ENCODE measurements at regions of chr6 and their contacts with region 1.

Region 1: DNA sequence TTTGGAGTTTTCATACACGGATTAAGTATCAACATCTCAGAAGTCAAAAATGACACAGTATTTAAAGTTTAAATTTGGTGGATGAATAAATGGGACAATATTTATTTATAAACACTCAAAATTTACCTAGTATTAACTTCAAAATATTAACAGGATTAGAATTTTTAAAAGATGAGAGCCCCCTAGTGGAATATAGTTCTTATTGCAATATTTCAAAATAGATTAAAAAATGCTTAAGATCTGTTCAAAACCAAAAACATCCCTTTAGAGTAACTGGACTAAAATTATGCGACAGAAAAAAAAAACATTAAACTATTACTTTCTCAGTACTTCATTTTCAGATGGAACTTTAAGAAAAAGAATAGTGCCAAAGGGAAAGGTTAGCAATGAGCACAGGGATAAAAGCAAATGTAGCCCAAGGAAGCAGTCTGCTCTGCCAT is 56.6 kb downstream of the SNX14 start:
- DNase-seq: no peak
- H3K4me3 Mint-ChIP-seq: no peak overlapping the region
- H3K27ac Mint-ChIP-seq: no peak overlapping the region
- H3K4me1 Mint-ChIP-seq: no peaks in the 10 kb centered on the region
- H3K27me3 Mint-ChIP-seq: no peaks in the 10 kb centered on the region
- CTCF ChIP-seq: peak; percentile 29

Region 2: DNA sequence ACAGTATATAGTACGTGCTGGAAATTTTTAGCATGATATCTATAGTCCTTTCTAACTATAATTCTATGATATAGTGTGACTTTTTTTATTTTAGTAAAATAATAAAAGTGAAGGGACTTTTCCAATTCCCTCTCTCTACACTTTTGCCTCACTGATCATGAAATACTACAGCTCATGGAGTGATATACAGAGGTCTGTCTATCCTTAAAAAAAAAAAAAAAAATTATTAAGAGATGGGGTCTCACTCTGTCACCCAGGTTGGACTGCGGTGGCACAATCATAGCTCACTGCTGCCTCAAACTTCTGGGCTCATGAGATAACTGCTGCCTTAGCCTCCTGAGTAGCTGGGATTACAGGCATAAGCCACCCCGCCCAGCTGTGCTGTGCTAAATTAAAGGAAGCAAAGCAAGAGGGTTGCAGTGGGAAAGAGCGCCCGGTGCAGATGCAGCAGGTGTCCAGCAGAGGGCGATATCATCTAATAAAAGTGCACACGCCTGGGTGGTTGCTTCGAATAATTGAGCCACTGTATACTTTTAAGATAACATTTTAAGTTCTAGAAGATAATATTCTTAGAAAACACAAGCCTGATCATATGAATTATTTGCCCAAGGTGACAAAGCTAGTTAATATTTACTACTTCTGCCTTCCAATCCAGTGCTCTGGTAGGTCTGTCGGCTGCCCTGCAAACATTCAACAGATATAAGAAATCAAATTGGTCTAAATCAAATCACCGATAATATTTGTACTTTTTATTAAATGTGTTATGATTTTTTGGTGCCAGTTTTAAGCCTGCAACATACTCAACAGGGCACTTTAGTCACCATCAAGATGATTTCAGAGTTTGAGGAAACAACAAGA is 182.1 kb before region 1 on chr6:
- CTCF ChIA-PET with region 1: no interaction called
- intact Hi-C with region 1: loop called (anchors 1 kb)
- DNase-seq: peak; percentile 79
- H3K4me3 Mint-ChIP-seq: no peak overlapping the region
- H3K27ac Mint-ChIP-seq: no peak overlapping the region
- H3K4me1 Mint-ChIP-seq: peaks cover 18% of the 10 kb centered on the region
- H3K27me3 Mint-ChIP-seq: no peaks in the 10 kb centered on the region
- CTCF ChIP-seq: peak; percentile 89

Region 3: DNA sequence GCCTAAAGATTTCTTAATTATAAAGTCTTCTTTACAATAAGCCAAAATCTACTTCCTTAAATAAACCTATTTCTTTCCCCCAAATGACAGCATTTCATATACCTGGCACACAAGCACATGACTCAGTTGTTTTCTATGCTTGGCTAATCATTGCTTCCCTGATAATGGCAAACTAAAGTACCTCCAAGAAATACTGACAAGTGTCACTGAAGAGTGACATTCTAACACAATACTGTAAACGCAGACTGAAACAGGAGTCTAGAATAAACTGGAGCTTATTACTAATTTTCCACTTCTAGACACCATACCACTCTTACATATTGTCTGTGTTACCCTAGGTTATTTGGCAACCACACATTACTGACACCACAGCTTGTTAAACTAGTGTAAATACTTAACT is 91.3 kb after region 1 on chr6:
- CTCF ChIA-PET with region 1: no interaction called
- intact Hi-C with region 1: no loop called
- DNase-seq: no peak
- H3K4me3 Mint-ChIP-seq: peak overlapping the region; percentile 7
- H3K27ac Mint-ChIP-seq: peak overlapping the region; percentile 32
- H3K4me1 Mint-ChIP-seq: peaks cover 37% of the 10 kb centered on the region
- H3K27me3 Mint-ChIP-seq: no peaks in the 10 kb centered on the region
- CTCF ChIP-seq: no peak